ENCODE measurements at regions of chr1 and their contacts with region 1.

Region 1: GRCh38 chr1:24909388-24909898 is 20.6 kb downstream of the RUNX3 start:
- DNase-seq: peak; percentile 85
- H3K4me3 ChIP-seq: no peak overlapping the region
- H3K27ac ChIP-seq: peak overlapping the region in 1 of 4 donors; percentile 29
- H3K4me1 ChIP-seq: peaks cover 4 to 17% (median 5%) of the 10 kb centered on the region in 4 donors
- H3K27me3 ChIP-seq: no peaks in the 10 kb centered on the region
- CTCF ChIP-seq: peak; percentile 35 to 87 (median 57)
- EP300 ChIP-seq: no peak
- POLR2A ChIP-seq: no peak

Region 2: GRCh38 chr1:23122023-23122748 is 1787.3 kb before region 1 on chr1:
- in situ Hi-C with region 1: no loop called
- intact Hi-C with region 1: no loop called
- DNase-seq: peak; percentile 68
- H3K4me3 ChIP-seq: no peak overlapping the region
- H3K27ac ChIP-seq: peak overlapping the region; percentile 56 to 73 (median 61)
- H3K4me1 ChIP-seq: peaks cover 22 to 78% (median 56%) of the 10 kb centered on the region in 4 donors
- H3K27me3 ChIP-seq: no peaks in the 10 kb centered on the region
- CTCF ChIP-seq: no peak
- EP300 ChIP-seq: no peak
- POLR2A ChIP-seq: no peak

Region 3: DNA sequence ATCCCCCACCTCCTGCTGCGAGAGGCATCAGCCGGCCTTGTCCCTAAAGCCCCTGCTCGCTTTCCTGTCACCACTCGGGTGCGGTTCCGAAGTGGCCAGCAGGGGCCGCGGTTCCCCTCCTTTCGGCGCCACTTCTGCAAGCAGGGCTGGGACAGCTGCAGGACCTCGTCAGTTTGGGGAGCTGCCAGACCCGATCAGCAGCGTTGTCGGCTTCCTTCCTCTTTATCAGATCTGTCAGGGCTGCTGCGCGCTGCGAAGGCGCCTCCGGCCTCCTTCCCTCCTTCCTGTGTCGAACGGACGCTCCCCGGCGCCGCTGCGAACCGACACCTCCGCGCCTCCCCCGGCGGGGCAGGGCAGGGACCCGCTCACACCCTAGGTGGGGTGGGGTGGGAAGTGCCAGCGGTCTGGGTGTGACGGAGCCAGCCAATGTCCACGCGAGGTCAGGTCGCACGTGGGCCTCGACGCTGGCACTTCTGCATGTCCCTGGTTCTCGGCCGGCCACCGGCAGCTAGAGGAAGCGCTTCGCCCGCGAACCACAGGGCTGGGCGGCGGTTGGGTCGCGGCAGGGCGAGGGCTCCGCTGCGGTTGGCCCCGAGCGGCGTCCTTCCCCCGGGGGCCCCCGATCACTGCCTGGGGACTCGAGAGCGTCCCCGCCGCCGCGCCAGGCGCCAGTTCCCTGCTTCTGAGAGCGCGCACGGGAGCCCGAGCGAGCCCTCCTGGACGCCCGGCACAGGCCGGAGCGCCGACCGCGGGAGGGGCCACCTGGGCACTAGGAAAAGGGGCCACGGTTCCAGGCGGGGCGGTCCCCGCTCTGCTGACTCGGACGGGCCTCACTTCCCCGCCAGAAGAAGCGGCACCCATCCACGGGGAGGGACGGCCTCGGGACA is 61.2 kb before region 1 on chr1:
- in situ Hi-C with region 1: loop called in 1 of 4 experiments (anchors 10 kb)
- intact Hi-C with region 1: no loop called
- DNase-seq: peak; percentile 95
- H3K4me3 ChIP-seq: peak overlapping the region; percentile 31 to 58 (median 46)
- H3K27ac ChIP-seq: peak overlapping the region; percentile 68 to 84 (median 72)
- H3K4me1 ChIP-seq: peaks cover 0 to 18% (median 9%) of the 10 kb centered on the region in 4 donors
- H3K27me3 ChIP-seq: no peaks in the 10 kb centered on the region
- CTCF ChIP-seq: peak; percentile 93 to 98 (median 96)
- EP300 ChIP-seq: no peak
- POLR2A ChIP-seq: peak; percentile 47

Region 4: GRCh38 chr1:25208561-25209222 is 299.2 kb after region 1 on chr1:
- in situ Hi-C with region 1: no loop called
- intact Hi-C with region 1: no loop called
- DNase-seq: no peak
- H3K4me3 ChIP-seq: no peak overlapping the region
- H3K27ac ChIP-seq: peak overlapping the region in 3 of 4 donors; percentile 26 to 53 (median 51)
- H3K4me1 ChIP-seq: peaks cover 0 to 27% (median 10%) of the 10 kb centered on the region in 4 donors
- H3K27me3 ChIP-seq: peaks cover 3% of the 10 kb centered on the region
- CTCF ChIP-seq: no peak
- EP300 ChIP-seq: no peak
- POLR2A ChIP-seq: no peak